Esophagus muscularis mucosa (tissue), 4 donors: ENCODE measurements at regions of chr4 and their contacts with region 1.

Region 1: GRCh38 chr4:44448548-44449461 is at the start of gene KCTD8:
- DNase-seq: peak; percentile 96
- H3K4me3 ChIP-seq: peak within 1 kb of the TSS; percentile 65 to 75 (median 71)
- H3K27ac ChIP-seq: peak within 1 kb of the TSS; percentile 87 to 94 (median 89)
- H3K4me1 ChIP-seq: peaks cover 16 to 42% (median 39%) of the 10 kb centered on the region in 4 donors
- H3K27me3 ChIP-seq: peaks cover 0 to 30% (median 2%) of the 10 kb centered on the region in 4 donors
- CTCF ChIP-seq: peak; percentile 60 to 76 (median 67)
- EP300 ChIP-seq: no peak
- POLR2A ChIP-seq: no peak
- total RNA-seq, gene KCTD8: 0.66 to 2.4 (median 1.5) TPM

Region 2: GRCh38 chr4:44493924-44494323 is 45.1 kb after region 1 on chr4:
- intact Hi-C with region 1: loop called (anchors 10 kb)
- DNase-seq: no peak
- H3K4me3 ChIP-seq: no peak overlapping the region
- H3K27ac ChIP-seq: no peak overlapping the region
- H3K4me1 ChIP-seq: no peaks in the 10 kb centered on the region
- H3K27me3 ChIP-seq: peaks cover 0 to 2% (median 0%) of the 10 kb centered on the region in 4 donors
- CTCF ChIP-seq: peak; percentile 27 to 47 (median 42)
- EP300 ChIP-seq: no peak
- POLR2A ChIP-seq: no peak

Region 3: DNA sequence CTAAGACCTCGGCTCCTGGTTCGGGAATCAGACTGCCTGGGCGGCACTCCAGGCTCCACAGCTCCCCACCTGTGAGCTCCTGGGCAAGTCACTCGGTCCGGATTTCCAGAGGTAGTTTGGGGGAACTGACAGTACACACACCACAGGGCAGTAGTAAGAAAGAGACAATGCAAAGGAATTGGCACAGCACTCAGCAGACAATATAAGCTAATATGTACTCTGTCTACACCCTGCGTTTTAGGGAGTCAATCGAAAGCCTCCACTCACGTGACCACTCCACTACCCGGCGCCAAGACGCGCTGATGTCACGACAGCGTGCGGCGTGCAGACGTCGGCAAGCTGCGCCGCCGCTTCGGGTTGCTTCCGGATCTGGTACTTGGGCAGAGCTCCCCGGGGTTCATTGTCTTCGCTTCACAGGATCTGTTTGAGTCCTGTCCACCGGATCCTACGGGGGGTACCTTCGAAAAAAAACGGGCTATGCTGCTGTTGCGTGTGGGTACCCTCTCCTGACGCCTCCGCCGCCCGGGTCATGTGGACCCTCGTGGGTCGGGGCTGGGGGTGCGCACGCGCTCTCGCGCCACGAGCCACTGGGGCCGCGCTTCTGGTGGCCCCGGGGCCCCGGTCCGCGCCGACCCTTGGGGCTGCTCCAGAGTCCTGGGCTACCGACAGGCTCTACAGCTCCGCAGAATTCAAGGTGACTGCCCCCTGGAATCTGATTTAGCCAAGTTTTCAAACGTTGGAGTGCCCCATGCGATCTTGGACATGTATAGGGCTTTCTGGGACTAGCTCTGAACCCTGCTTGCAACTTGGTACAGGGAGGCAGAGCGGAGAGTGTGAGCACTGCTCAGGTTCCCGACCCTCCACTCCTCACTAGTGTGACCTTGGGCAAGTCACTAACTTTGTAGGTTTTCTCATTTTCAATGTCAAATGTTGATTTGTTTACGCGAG is 229.6 kb after region 1 on chr4 and contains the start of gene GUF1:
- intact Hi-C with region 1: loop called (anchors 5 kb)
- DNase-seq: peak; percentile 96
- H3K4me3 ChIP-seq: peak within 1 kb of the TSS; percentile 73 to 88 (median 80)
- H3K27ac ChIP-seq: peak within 1 kb of the TSS; percentile 86 to 92 (median 88)
- H3K4me1 ChIP-seq: peaks cover 20 to 29% (median 26%) of the 10 kb centered on the region in 4 donors
- H3K27me3 ChIP-seq: no peaks in the 10 kb centered on the region
- CTCF ChIP-seq: peak in 1 of 3 experiments; percentile 15
- EP300 ChIP-seq: no peak
- POLR2A ChIP-seq: no peak
- total RNA-seq, gene GUF1: 11.4 to 15.7 (median 14.5) TPM